Mammary epithelial cell (primary cell): ENCODE measurements at regions of chr1 and their contacts with region 1.

Region 1: DNA sequence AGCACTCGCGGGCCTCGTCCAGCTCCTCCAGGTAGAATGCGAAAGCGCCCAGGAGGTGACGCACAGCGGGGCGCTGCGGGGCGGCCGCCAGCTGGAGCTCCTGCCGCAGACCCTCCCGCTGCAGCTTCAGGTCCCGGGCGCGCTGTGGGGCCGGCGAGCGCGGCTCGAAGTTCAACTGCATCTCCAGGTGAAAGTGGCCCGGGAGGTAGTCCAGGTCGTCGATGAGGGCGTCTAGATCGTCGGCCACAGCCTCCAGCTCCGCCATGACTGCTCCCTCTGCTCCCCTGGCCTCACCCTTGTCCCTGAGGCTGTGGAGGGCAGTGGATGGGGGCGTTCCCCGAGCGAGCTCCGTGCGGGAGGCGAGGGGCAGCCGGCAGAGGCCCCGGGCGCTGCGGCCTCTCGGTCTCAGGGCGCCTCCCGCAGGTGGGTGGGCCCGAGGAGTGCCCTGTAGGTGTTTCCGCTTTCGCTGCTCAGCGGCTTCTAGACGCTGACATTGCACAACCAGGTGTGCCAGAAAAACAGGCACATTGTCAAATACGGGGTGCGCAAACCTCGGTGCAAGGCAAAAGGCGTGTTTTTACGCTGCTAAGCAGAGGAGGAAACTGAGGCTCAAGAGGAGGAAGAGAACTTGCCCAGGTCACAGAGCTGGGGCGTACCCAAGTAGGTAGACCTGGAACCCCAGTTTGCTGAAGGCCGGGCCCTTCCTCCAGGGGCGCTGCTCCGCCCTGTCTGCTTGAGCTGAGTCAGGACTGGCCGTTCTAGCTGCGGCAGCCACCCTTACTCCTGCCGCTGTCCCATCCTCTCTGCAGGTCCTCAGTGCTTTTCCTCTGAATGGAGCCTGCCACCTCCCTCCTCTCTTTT is at the start of gene TTC22:
- DNase-seq: peak; percentile 72
- H3K4me3 ChIP-seq: peak within 1 kb of the TSS; percentile 48 to 62 (median 59)
- H3K27ac ChIP-seq: no peak within 1 kb of the TSS
- H3K4me1 ChIP-seq: peaks cover 33% of the 10 kb centered on the region
- H3K27me3 ChIP-seq: no peaks in the 10 kb centered on the region
- CTCF ChIP-seq: peak; percentile 59 to 80
- total RNA-seq, gene TTC22: 7.9 to 13.3 TPM

Region 2: DNA sequence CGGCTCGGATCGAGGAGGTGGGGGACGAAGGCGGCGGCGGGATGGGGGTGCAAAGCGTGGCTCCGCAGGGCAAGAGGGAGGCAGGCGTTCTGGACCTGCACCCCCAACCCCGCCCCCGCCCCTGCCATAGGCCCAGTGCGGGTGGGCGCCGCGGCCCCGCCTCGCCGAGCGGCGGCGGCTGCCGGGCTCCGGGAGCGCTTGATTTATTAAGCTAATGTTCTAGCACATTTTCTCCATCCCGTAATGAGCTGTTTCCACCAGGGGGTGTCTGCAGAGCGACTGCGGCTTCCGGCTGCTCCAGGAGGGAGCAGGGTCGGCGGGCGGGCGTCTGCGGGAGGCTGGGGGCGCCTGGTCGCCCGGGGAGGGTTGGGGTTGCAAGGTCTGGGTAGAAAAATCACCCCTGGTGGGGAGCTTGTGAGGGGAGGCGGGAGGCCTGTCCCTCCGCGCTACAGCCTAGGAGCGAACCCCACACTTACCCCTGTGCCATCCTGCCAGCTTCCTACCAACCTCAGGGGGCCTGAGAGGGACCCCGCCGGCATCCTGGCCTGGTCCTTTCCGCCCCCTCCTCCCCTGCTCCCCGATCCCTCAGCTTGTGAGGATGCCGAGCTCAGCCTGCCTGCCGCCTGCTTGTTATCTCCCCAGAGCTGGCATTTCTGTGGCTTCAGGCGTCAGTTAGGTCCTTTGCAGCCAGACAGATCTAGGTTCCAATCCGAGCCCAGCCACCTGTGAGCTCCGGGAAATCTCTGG is 301.6 kb before region 1 on chr1:
- CTCF ChIA-PET with region 1: interaction called, 6 read pairs
- dilution Hi-C with region 1: no loop called
- in situ Hi-C with region 1: loop called in 1 of 2 experiments (anchors 10 kb)
- intact Hi-C with region 1: no loop called
- DNase-seq: peak; percentile 12
- H3K4me3 ChIP-seq: peak overlapping the region; percentile 29 to 45 (median 44)
- H3K27ac ChIP-seq: no peak overlapping the region
- H3K4me1 ChIP-seq: peaks cover 20% of the 10 kb centered on the region
- H3K27me3 ChIP-seq: no peaks in the 10 kb centered on the region
- CTCF ChIP-seq: peak in 1 of 2 donors; percentile 59

Region 3: GRCh38 chr1:54715493-54716298 is 85.4 kb before region 1 on chr1 and contains the start of gene TTC4:
- CTCF ChIA-PET with region 1: interaction called, 4 read pairs
- dilution Hi-C with region 1: no loop called
- in situ Hi-C with region 1: no loop called
- intact Hi-C with region 1: loop called (anchors 1 kb)
- DNase-seq: peak; percentile 85
- H3K4me3 ChIP-seq: peak within 1 kb of the TSS; percentile 47 to 94 (median 60)
- H3K27ac ChIP-seq: peak within 1 kb of the TSS; percentile 85
- H3K4me1 ChIP-seq: peaks cover 4% of the 10 kb centered on the region
- H3K27me3 ChIP-seq: no peaks in the 10 kb centered on the region
- CTCF ChIP-seq: peak in 1 of 2 donors; percentile 16
- total RNA-seq, gene TTC4: 22.7 to 29.2 TPM

Region 4: DNA sequence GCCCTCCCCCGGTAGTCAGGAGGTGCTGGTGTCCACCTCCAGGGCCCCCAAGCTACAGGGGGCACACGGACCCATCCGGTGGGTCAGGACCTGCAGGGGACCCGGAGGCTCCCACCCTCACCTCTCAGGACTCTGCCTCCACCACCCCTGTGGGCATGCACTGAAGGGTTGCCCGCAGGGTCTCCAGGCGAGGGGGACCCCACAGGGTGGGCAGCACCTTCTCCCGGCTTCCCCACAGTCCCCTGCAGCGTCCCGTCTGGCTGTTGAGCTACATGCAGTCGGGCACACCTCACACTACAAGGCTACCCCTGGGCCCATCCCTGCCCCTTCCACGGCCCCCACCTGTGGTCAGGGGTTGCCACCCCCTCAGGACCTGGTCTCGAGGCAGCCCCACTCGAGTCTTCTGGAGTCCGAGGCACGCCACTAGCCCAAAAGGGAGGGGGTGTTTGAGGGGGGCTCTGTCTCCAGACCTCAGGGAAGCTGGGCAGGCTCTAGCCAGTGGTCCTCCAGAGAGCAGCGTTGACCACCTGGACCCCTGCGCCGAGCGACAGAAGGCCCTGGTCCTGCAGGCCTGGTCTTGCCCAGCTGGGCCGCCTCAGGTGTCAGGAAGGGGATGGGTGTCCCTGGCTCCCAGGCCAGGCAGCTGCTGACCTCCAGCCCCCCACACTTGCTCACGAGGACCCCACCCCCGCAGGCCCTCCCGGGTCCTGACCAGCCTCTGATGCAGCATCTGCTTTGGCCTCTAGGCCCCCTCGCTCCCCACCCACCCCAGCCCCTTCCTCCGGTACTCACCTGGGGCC is 46.4 kb before region 1 on chr1:
- CTCF ChIA-PET with region 1: no interaction called
- dilution Hi-C with region 1: loop called (anchors 5 kb)
- in situ Hi-C with region 1: no loop called
- intact Hi-C with region 1: no loop called
- DNase-seq: no peak
- H3K4me3 ChIP-seq: no peak overlapping the region
- H3K27ac ChIP-seq: no peak overlapping the region
- H3K4me1 ChIP-seq: no peaks in the 10 kb centered on the region
- H3K27me3 ChIP-seq: no peaks in the 10 kb centered on the region
- CTCF ChIP-seq: no peak

Region 5: GRCh38 chr1:54950369-54951163 is 149.4 kb after region 1 on chr1:
- CTCF ChIA-PET with region 1: no interaction called
- dilution Hi-C with region 1: no loop called
- in situ Hi-C with region 1: no loop called
- intact Hi-C with region 1: no loop called
- DNase-seq: peak; percentile 71
- H3K4me3 ChIP-seq: peak overlapping the region in 1 of 3 experiments; percentile 10
- H3K27ac ChIP-seq: no peak overlapping the region
- H3K4me1 ChIP-seq: peaks cover 31% of the 10 kb centered on the region
- H3K27me3 ChIP-seq: no peaks in the 10 kb centered on the region
- CTCF ChIP-seq: peak; percentile 60 to 76